HepG2 (cell line): ENCODE measurements at regions of chr1 and their contacts with region 1.

Region 1: DNA sequence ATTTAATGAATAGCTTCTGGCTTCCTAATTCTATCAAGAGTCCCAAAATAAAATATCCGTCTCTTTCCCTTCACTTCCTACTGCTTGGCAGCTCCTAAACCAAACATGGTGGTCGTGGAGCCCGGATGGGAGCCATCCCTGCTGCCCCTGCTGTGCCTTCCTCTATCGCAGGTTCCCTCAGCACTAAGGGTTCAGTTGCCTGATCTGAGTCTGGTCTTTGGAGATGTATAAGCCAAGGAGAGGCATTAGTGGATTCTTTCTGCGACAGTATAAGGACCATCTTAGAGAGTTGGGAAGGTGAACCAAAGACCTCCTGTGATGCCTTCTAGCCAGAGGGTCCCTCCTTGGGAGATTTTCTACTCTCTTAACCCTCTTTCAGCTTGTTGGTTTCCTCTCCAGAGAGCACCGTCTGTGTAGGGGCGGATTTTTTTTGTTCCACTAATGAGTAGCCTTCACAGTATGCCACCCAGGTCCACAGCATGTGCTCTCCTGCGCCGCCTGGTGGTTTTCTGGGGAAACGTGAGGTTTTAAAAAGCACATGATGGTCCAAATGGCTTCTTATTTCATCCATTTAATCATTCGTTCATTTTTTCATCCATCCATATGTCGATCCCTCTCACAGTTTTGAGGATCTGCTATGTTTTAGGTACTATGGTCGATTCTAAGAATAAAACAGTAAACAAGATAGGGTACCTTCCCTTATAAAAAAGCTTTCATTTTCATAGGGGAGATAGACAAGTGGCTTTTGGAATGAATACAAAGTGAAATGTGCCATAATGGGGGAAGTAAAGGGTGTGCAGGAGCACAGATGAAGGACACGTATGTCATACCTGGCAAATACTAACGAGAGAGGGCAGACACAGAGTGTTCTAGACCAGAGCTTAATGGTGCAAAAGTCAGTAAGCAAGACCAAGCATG is 71.0 kb downstream of the NFASC start:
- DNase-seq: peak; percentile 42
- ATAC-seq: peak; percentile 72
- H3K4me3 ChIP-seq: no peak overlapping the region
- H3K27ac ChIP-seq: no peak overlapping the region
- H3K4me1 ChIP-seq: peaks cover 9% of the 10 kb centered on the region; the same call in 1 of the 2 replicates
- H3K27me3 ChIP-seq: peaks cover 0 to 22% of the 10 kb centered on the region in 2 experiments; a peak in 2 of 5 replicates
- CTCF ChIP-seq: peak; percentile 73
- EP300 ChIP-seq: no peak
- POLR2A ChIP-seq: no peak
- RAD21 ChIP-seq: peak; percentile 60

Region 2: DNA sequence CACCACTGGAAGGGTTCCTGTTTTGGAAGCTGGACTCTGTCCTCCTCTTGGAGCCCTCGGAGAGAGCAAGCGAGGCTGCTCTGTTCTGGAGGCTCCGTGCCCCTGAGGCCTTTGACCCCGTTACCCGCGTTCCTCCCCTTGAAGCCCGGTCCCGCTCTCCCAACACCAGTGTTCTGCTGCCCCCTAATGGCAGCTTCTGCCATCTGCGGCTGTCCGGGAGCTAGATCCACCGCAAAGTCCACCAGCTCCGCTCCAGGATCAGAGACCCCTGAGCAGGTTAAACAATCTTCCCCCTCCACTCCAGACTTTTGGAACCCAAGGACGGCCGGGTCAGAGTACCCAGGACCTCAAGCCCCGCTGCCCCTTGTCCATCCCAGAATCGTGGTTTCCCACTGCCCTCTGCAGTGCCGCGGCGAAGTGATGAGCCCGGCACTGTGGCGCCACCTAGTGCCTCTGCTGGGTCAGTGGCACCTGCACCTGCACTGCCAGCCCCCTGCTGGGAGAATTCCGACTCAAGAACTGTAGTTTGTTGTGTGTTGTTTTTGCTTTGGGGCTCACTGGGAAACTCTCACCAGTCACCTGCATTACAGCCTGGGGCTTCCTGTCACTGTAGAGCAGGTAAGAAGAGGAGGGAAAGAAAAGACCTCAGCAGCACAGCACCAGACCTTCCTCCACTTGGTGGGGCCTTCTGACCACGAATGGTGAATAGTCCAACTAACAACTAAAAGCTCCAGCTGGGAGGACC is 134.6 kb before region 1 on chr1:
- CTCF ChIA-PET with region 1: interaction called, 22 read pairs
- POLR2A ChIA-PET with region 1: no interaction called
- in situ Hi-C with region 1: no loop called
- intact Hi-C with region 1: loop called (anchors 1 kb)
- DNase-seq: peak; percentile 70
- ATAC-seq: peak; percentile 97
- H3K4me3 ChIP-seq: peak overlapping the region; percentile 18 to 72 (median 57); a peak in 5 of 6 replicates
- H3K27ac ChIP-seq: no peak overlapping the region
- H3K4me1 ChIP-seq: peaks cover 20% of the 10 kb centered on the region
- H3K27me3 ChIP-seq: no peaks in the 10 kb centered on the region
- CTCF ChIP-seq: peak; percentile 89
- EP300 ChIP-seq: no peak
- POLR2A ChIP-seq: no peak
- RAD21 ChIP-seq: peak; percentile 86

Region 3: GRCh38 chr1:204828338-204828850 is 113.3 kb before region 1 on chr1:
- CTCF ChIA-PET with region 1: interaction called, 10 read pairs
- POLR2A ChIA-PET with region 1: no interaction called
- in situ Hi-C with region 1: no loop called
- intact Hi-C with region 1: loop called (anchors 1 kb)
- DNase-seq: peak; percentile 16
- ATAC-seq: peak; percentile 83
- H3K4me3 ChIP-seq: no peak overlapping the region
- H3K27ac ChIP-seq: no peak overlapping the region
- H3K4me1 ChIP-seq: no peaks in the 10 kb centered on the region
- H3K27me3 ChIP-seq: peaks cover 5 to 23% of the 10 kb centered on the region in 2 experiments; a peak in 4 of 5 replicates
- CTCF ChIP-seq: peak; percentile 4; the same call in 1 of the 2 replicates
- EP300 ChIP-seq: no peak
- POLR2A ChIP-seq: no peak
- RAD21 ChIP-seq: no peak

Region 4: DNA sequence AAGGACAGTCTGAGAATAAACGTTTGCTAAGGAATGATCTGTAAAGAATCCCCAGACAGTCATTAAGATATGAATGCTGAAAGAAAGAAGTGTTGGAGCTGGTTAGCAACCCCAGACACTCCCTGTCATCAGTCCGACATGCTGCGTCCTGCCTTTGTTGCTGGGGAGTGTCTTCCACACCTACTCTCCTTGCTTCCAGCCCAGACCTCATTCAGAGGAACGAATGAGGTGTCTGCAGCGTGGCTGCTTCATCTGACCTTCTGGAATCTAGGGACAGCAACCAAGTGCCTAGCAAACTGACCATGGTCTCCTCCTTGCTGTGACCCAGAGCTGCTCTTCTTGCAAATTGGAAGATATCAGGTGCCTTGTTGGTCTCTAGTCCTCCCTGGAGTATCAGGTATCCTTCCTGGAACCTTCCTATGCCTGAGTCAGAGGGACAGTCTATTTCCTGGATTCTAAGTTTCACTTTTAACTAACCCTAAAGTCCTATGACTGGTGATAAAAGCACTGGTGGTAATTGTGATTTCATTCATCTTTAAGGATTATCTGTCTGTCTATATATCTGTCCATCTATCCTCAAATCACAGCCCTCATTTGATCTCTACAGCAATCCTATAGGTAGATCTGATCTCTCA is 25.7 kb before region 1 on chr1:
- CTCF ChIA-PET with region 1: no interaction called
- POLR2A ChIA-PET with region 1: no interaction called
- in situ Hi-C with region 1: no loop called
- intact Hi-C with region 1: no loop called
- DNase-seq: no peak
- ATAC-seq: no peak
- H3K4me3 ChIP-seq: no peak overlapping the region
- H3K27ac ChIP-seq: no peak overlapping the region
- H3K4me1 ChIP-seq: peaks cover 17% of the 10 kb centered on the region; the same call in 1 of the 2 replicates
- H3K27me3 ChIP-seq: no peaks in the 10 kb centered on the region
- CTCF ChIP-seq: no peak
- EP300 ChIP-seq: no peak
- POLR2A ChIP-seq: no peak
- RAD21 ChIP-seq: no peak